ENCODE measurements at regions of chr17 and their contacts with region 1.

Region 1: DNA sequence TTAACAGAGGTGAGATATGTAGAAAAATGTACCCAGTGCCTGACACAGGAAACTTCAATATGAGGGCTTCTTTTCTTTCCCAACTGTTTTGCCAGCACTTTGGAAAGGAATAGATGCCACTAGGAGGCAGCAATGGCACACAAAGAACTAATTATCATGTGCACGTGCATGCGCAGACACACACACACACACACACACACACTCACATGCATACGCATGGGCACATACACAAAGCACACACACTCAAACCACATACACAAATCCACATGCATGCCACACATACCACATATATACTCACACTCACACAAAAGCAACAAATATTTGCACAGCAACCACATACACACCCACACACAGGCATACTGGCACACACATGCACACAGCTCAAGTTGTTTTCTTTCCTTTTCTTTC is 8.8 kb upstream of the CEP112 start:
- DNase-seq: peak; percentile 87
- ATAC-seq: peak; percentile 49
- H3K4me3 ChIP-seq: peak overlapping the region in 1 of 3 experiments; percentile 5; a peak in 1 of 6 replicates
- H3K27ac ChIP-seq: no peak overlapping the region
- H3K4me1 ChIP-seq: peaks cover 24% of the 10 kb centered on the region
- H3K27me3 ChIP-seq: no peaks in the 10 kb centered on the region
- CTCF ChIP-seq: peak; percentile 99
- EP300 ChIP-seq: no peak
- POLR2A ChIP-seq: no peak
- RAD21 ChIP-seq: peak; percentile 94

Region 2: GRCh38 chr17:66135896-66136295 is 64.8 kb before region 1 on chr17:
- CTCF ChIA-PET with region 1: no interaction called
- POLR2A ChIA-PET with region 1: no interaction called
- in situ Hi-C with region 1: no loop called
- intact Hi-C with region 1: no loop called
- DNase-seq: no peak
- ATAC-seq: no peak
- H3K4me3 ChIP-seq: no peak overlapping the region
- H3K27ac ChIP-seq: no peak overlapping the region
- H3K4me1 ChIP-seq: no peaks in the 10 kb centered on the region
- H3K27me3 ChIP-seq: no peaks in the 10 kb centered on the region
- CTCF ChIP-seq: no peak
- EP300 ChIP-seq: no peak
- POLR2A ChIP-seq: no peak
- RAD21 ChIP-seq: no peak

Region 3: GRCh38 chr17:66228887-66229782 is 28.4 kb after region 1 on chr17 and contains the start of gene APOH:
- CTCF ChIA-PET with region 1: no interaction called
- POLR2A ChIA-PET with region 1: interaction called, 4 read pairs
- in situ Hi-C with region 1: no loop called
- intact Hi-C with region 1: loop called (anchors 2 kb)
- DNase-seq: peak; percentile 99
- ATAC-seq: peak; percentile 87
- H3K4me3 ChIP-seq: peak within 1 kb of the TSS; percentile 55 to 77 (median 70)
- H3K27ac ChIP-seq: peak within 1 kb of the TSS; percentile 89
- H3K4me1 ChIP-seq: peaks cover 70% of the 10 kb centered on the region
- H3K27me3 ChIP-seq: no peaks in the 10 kb centered on the region; a peak in 1 of 5 replicates
- CTCF ChIP-seq: no peak
- EP300 ChIP-seq: peak in 1 of 2 experiments; percentile 93; a peak in 3 of 4 replicates
- POLR2A ChIP-seq: peak; percentile 83 to 89
- RAD21 ChIP-seq: 0 out of 2 replicates have a peak, but pooled peaks have one; percentile 18
- total RNA-seq, gene APOH: 2,482 and 4,846 TPM in 2 replicates

Region 4: DNA sequence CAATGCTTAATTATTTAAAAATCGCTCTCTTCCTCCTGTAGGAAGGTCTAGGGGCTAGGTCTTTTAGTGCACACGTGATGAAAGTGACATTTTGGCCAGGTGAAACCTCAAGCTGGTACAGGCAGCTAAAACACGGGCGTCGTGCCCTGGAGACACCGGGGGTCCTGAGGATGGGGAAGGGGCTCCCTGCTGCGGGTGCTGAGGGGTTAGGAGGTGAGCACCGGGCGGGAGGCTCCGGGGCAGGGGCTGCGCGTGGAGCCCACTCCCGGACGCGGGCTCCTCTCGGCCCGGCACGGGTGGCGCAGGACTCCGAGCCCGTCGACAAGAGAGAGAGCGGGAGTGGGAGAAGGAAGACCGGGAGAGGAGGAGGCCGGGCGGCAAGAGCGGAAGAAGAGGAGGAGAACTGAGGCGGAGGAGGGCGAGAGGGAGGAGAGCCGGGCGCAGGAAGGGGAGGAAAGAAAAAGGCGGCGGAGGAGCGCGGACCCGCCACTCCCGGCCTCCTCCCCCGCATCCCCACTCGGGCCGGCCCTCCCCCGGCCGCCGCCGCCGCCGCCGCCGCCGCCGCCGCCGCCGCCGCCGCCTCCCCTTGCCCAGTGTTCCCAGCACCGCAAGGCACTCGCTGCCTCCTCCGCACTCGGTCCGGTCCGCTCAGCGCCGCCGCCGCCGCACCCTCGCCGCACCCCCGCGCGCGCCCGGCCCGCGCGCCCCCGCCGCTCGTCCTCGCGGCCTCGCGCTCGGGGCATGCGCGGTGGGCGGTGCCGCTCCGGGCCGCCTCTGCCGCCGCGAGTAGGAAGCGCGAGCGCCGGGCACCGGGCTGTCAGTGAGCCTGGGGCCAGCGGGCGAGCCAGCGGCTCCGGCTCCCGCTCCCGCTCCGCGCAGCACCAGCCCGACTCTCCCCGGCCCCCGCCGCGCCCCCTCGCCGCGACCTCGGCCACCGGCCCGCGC is 101.4 kb after region 1 on chr17 and contains the start of gene PRKCA:
- CTCF ChIA-PET with region 1: no interaction called
- POLR2A ChIA-PET with region 1: no interaction called
- in situ Hi-C with region 1: no loop called
- intact Hi-C with region 1: loop called (anchors 5 kb)
- DNase-seq: peak; percentile 54
- ATAC-seq: peak; percentile 60
- H3K4me3 ChIP-seq: peak within 1 kb of the TSS; percentile 88 to 95 (median 91)
- H3K27ac ChIP-seq: peak within 1 kb of the TSS; percentile 61
- H3K4me1 ChIP-seq: peaks cover 32% of the 10 kb centered on the region
- H3K27me3 ChIP-seq: no peaks in the 10 kb centered on the region
- CTCF ChIP-seq: no peak
- EP300 ChIP-seq: no peak
- POLR2A ChIP-seq: peak; percentile 91 to 97
- RAD21 ChIP-seq: no peak; the same call in 1 of the 2 replicates
- total RNA-seq, gene PRKCA: 18.5 and 24.4 TPM in 2 replicates

Region 5: DNA sequence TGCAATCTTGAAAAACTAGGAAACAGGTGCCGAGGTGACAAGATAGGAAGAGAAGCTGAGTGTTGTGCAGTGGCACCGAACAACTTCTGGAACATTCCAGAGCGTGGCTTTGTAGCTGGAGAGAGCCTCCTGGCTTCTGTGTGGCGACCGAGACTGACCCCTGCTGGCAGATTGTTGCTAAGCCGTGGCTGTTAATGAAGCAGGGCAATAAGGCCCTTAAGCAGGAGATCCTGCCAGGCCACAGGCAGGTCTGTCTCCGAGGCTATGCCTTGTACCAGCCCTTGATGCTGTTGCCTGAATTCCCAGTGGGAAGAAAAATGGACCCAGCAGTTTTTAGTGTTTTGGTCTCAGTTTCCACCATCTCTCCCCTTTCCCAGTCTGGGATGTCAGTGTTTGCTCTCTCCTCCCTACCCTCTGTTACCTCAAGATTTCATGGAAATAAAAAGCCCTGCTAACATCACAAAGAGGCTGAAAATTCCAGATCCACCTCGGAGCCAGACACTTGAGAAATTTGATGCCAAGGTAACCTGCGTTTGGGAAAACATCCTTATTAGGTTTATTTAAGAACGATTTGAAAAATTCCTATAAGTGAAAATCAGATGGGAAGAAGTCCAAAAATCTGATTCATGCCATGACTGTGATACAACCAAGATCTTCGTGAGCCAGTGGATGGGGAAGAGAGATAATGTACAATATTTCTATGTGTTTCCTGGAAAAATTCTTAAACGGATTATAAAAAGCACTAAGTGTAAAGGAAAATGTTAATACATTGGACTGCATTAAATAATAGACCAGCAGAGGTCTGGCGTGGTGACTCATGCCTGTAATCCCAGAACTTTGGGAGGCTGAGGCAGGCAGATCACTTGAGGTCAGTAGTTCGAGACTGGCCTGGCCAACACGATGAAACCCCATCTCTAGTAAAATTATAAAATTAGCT is 366.8 kb after region 1 on chr17:
- CTCF ChIA-PET with region 1: interaction called, 10 read pairs
- POLR2A ChIA-PET with region 1: no interaction called
- in situ Hi-C with region 1: loop called (anchors 5 kb)
- intact Hi-C with region 1: loop called (anchors 1 kb)
- DNase-seq: peak; percentile 73
- ATAC-seq: peak; percentile 96
- H3K4me3 ChIP-seq: no peak overlapping the region
- H3K27ac ChIP-seq: no peak overlapping the region
- H3K4me1 ChIP-seq: peaks cover 15% of the 10 kb centered on the region
- H3K27me3 ChIP-seq: no peaks in the 10 kb centered on the region
- CTCF ChIP-seq: peak; percentile 96
- EP300 ChIP-seq: peak in 1 of 2 experiments; percentile 54; a peak in 1 of 4 replicates
- POLR2A ChIP-seq: no peak
- RAD21 ChIP-seq: peak; percentile 98

Region 6: GRCh38 chr17:66673668-66674315 is 473.1 kb after region 1 on chr17:
- CTCF ChIA-PET with region 1: interaction called, 7 read pairs
- POLR2A ChIA-PET with region 1: no interaction called
- in situ Hi-C with region 1: no loop called
- intact Hi-C with region 1: loop called (anchors 1 kb)
- DNase-seq: peak; percentile 43
- ATAC-seq: peak; percentile 83
- H3K4me3 ChIP-seq: no peak overlapping the region
- H3K27ac ChIP-seq: no peak overlapping the region
- H3K4me1 ChIP-seq: peaks cover 8% of the 10 kb centered on the region
- H3K27me3 ChIP-seq: no peaks in the 10 kb centered on the region
- CTCF ChIP-seq: peak; percentile 74
- EP300 ChIP-seq: no peak
- POLR2A ChIP-seq: no peak
- RAD21 ChIP-seq: peak; percentile 74

Region 7: DNA sequence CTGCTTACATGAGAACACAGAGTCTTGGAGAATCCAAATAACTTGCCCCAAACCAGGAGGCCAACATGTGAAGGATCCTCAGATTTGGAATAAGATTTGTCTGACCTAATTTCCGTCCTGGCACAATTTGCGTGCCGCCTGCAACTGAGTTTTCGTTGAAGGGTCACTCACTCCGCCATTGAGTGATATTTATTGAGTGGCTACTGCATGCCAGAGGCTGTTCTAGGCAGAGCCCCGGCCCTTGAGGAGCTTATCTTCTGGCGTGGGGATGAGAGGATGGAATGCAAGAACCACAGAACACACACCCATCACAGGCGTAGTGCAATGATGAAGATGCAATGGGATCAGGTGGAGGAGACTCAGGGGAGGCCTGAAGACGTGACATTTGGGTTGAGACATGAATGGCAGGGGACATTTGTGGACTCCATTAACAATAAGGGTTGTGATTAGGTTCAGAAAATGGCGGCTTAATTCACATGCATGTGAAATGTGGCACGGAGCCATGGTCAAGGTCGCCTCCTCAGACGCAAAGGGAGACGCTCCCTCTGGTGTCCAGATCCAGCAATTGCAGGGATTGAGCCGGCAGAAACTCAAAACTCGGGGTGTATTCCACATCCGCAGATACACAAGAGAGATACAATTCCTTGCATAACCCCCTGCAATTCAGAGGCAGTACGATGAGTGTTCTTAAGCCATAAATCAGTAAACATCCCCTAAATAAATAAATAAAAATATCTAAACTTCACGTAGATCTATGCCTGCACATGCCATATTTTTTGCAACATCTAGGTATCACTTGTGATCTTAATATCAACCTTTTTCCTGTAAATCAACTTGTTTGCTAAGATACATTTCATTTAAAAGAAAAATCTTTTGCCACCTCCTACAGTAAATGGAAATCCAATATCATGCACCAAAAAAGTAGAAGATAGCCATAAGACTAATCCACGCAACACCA is 705.9 kb after region 1 on chr17:
- CTCF ChIA-PET with region 1: interaction called, 3 read pairs
- POLR2A ChIA-PET with region 1: no interaction called
- in situ Hi-C with region 1: loop called (anchors 10 kb)
- intact Hi-C with region 1: loop called (anchors 5 kb)
- DNase-seq: peak; percentile 74
- ATAC-seq: peak; percentile 45
- H3K4me3 ChIP-seq: no peak overlapping the region
- H3K27ac ChIP-seq: no peak overlapping the region
- H3K4me1 ChIP-seq: peaks cover 12% of the 10 kb centered on the region
- H3K27me3 ChIP-seq: peaks cover 3 to 35% of the 10 kb centered on the region in 2 experiments; a peak in 4 of 5 replicates
- CTCF ChIP-seq: peak; percentile 94
- EP300 ChIP-seq: no peak; a peak in 1 of 4 replicates
- POLR2A ChIP-seq: no peak
- RAD21 ChIP-seq: peak; percentile 86

Measured in HepG2 (cell line).